AG04449 (cell line): ENCODE measurements at regions of chr19 and their contacts with region 1.

Region 1: GRCh38 chr19:7799640-7800355 is 30.2 kb upstream of the EVI5L start:
- DNase-seq: no peak
- H3K4me3 ChIP-seq: peak overlapping the region; percentile 48
- CTCF ChIP-seq: peak; percentile 38

Region 2: GRCh38 chr19:7098701-7099596 is 700.8 kb before region 1 on chr19:
- CTCF ChIA-PET with region 1: interaction called, 10 read pairs
- POLR2A ChIA-PET with region 1: no interaction called
- DNase-seq: peak; percentile 28
- H3K4me3 ChIP-seq: peak overlapping the region; percentile 81
- CTCF ChIP-seq: no peak

Region 3: DNA sequence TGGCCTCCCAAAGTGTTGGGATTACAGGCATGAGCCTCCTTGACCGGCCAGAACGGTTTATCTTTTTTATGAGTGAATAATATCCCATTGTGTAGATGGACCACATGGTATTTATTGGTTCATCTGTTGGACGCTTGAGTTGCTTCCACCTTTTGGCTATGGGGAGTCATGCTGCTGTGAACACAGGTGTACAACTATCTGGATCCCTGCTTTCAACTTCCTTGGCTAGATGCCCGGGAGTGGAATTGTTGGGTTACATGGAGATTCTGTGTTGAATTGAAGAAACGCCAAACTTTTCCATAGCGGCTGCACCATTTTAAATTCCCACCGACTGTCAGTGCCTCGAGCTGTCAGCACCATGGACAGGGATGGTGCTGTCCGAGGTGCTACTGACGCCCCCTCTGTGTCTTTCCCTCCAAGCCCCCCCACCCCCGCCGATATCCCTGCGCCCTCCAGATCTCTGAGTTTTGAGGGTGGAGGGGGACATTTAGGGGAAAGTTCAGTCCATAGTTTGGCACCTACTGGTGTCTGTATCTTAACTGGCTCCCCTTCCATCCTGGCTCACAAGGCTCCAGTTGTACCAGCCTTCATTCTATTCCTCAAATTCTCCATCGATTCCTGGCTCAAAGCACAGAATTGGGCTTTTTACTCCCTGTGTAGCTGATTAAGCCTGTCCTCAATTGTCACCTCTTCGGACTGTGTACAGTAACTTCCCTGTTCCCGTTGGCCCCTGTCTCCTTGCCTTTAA is 237.0 kb before region 1 on chr19:
- CTCF ChIA-PET with region 1: interaction called, 152 read pairs
- POLR2A ChIA-PET with region 1: no interaction called
- DNase-seq: no peak
- H3K4me3 ChIP-seq: no peak overlapping the region
- CTCF ChIP-seq: no peak

Region 4: DNA sequence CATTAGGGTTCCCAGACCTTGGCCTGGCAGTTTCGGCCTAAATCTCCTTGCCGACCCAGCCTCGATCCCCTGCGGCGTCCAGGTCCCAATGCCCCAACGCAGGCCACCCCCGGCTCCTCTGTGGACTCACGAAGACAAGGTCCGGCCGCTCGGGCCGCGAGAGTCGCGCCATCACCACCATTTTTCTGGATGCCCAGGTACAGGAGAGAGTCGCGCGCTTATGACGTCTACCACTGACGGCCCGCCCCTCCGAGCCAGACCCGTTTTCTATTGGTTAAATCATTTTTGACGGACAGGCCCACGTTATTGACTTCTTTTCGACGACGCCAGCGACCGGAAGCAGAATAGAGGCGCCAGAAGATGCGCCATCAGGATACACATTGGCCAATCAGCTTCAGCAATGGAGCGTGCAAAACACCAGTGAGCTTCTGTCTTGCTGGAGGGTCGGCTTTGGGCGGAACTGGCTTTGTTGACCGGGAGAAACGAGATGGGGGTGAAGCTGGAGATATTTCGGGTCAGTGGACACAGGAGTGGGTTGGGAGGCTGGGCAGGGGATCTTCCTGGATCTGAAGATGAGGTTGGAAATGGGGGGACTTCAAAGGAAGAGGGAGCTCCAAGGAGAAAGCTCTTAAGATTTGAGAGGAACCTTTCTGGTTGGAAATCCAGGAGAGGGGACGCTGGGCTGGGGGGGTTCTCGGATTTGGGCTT is 170.3 kb before region 1 on chr19 and contains the starts of genes PET100 and XAB2:
- CTCF ChIA-PET with region 1: interaction called, 12 read pairs
- POLR2A ChIA-PET with region 1: no interaction called
- DNase-seq: peak; percentile 94
- H3K4me3 ChIP-seq: peak within 1 kb of the TSS; percentile 99
- CTCF ChIP-seq: no peak

Region 5: DNA sequence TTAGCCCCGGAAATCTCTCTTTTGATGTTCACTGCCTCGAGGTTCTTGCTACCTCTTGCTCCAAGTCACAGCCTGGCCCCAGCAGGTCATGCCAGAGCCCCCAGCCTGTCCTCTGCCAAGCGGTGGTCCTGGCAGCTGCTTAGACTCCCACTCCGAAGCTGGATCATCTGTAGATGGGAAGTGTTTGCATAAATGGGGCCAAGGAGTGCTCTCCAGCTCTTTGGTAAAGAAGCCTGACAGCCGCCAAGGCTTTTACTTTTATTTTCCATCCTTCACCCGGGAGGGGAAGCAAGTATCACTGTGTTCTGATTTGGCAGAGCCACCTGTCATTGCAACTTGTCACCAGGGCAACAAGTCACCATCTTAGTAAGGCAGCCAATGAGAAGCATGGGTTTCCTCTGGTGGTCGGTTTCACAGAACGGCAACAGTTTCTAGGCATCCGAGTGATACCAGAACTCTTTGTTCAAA is 141.5 kb before region 1 on chr19:
- CTCF ChIA-PET with region 1: interaction called, 65 read pairs
- POLR2A ChIA-PET with region 1: no interaction called
- DNase-seq: no peak
- H3K4me3 ChIP-seq: no peak overlapping the region
- CTCF ChIP-seq: no peak

Region 6: GRCh38 chr19:7685541-7686416 is 114.0 kb before region 1 on chr19:
- CTCF ChIA-PET with region 1: interaction called, 52 read pairs
- POLR2A ChIA-PET with region 1: no interaction called
- DNase-seq: no peak
- H3K4me3 ChIP-seq: no peak overlapping the region
- CTCF ChIP-seq: no peak

Region 7: GRCh38 chr19:7829561-7830271 is 29.9 kb after region 1 on chr19 and contains the start of gene EVI5L:
- CTCF ChIA-PET with region 1: interaction called, 12 read pairs
- POLR2A ChIA-PET with region 1: no interaction called
- DNase-seq: peak; percentile 100
- H3K4me3 ChIP-seq: peak within 1 kb of the TSS; percentile 70
- CTCF ChIP-seq: no peak